Caco-2 (cell line): ENCODE measurements at regions of chr15 and their contacts with region 1.

Region 1: DNA sequence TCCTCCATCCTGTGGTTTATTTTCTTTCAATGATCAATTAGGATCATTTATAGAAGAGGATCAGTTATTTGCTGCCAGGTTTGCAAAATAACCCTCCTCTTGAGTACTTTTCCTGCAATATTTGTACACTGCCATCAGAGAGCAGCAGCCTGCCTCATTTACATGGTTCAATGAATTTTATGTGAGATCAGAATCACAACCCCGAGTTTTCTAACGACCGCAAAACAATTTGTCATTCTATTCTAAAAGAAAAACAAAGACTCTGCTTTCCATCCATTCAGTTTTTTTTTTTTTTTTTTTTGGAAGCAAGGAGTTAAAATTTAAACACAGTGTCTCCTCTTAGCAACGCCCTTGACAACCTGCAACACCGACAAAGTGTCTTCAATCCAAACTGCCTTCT is 146.9 kb downstream of the RAB11A start:
- DNase-seq: no peak
- H3K4me3 ChIP-seq: no peak overlapping the region
- H3K4me3 Mint-ChIP-seq: no peak overlapping the region
- H3K27ac Mint-ChIP-seq: no peak overlapping the region
- H3K4me1 ChIP-seq: no peaks in the 10 kb centered on the region
- H3K4me1 Mint-ChIP-seq: no peaks in the 10 kb centered on the region
- H3K27me3 ChIP-seq: no peaks in the 10 kb centered on the region; the same call in 1 of the 2 replicates
- H3K27me3 Mint-ChIP-seq: peaks cover 8% of the 10 kb centered on the region
- CTCF ChIP-seq: no peak

Region 2: GRCh38 chr15:65484876-65485275 is 531.3 kb before region 1 on chr15:
- CTCF ChIA-PET with region 1: no interaction called
- POLR2A ChIA-PET with region 1: no interaction called
- intact Hi-C with region 1: no loop called
- DNase-seq: no peak
- H3K4me3 ChIP-seq: no peak overlapping the region
- H3K4me3 Mint-ChIP-seq: no peak overlapping the region
- H3K27ac Mint-ChIP-seq: no peak overlapping the region
- H3K4me1 ChIP-seq: no peaks in the 10 kb centered on the region
- H3K4me1 Mint-ChIP-seq: no peaks in the 10 kb centered on the region
- H3K27me3 ChIP-seq: no peaks in the 10 kb centered on the region
- H3K27me3 Mint-ChIP-seq: no peaks in the 10 kb centered on the region
- CTCF ChIP-seq: no peak

Region 3: GRCh38 chr15:65998486-65998885 is 17.7 kb before region 1 on chr15:
- CTCF ChIA-PET with region 1: no interaction called
- POLR2A ChIA-PET with region 1: interaction called, 11 read pairs
- intact Hi-C with region 1: no loop called
- DNase-seq: no peak
- H3K4me3 ChIP-seq: no peak overlapping the region
- H3K4me3 Mint-ChIP-seq: no peak overlapping the region
- H3K27ac Mint-ChIP-seq: no peak overlapping the region
- H3K4me1 ChIP-seq: no peaks in the 10 kb centered on the region
- H3K4me1 Mint-ChIP-seq: no peaks in the 10 kb centered on the region
- H3K27me3 ChIP-seq: no peaks in the 10 kb centered on the region; the same call in 1 of the 2 replicates
- H3K27me3 Mint-ChIP-seq: peaks cover 13% of the 10 kb centered on the region
- CTCF ChIP-seq: no peak

Region 4: DNA sequence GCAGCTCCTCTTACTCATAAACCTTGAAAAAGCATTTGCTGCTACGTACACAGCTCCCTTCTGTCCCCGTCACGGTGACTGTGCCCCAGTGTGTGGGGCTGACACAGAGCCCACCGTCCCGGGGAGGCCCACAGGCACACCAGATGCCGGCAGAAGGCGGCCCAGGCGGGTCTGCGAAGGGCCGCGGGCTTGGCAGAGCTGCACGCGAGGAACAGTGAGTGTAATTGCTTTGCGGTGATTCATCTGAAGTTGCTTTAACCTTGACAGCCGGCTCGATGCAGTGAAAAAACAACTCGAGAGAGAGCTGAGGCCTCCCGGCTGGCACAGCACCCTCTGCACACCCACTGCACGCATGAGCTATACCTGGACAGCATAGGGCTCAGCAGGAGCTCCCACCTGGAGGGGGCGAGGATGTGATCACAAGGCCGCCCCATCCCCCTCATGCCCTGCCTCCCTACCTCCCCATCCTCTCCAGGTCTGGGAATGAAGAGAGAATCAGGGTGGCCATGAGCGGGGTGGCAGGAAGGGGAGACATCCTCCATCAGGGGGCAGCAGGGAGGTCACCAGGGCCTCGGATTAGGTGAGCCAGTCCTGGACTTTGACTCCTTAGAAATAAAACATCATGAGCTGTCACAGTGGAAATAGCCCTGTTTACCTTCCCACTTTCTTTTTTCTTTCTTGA is 64.7 kb after region 1 on chr15:
- CTCF ChIA-PET with region 1: no interaction called
- POLR2A ChIA-PET with region 1: no interaction called
- intact Hi-C with region 1: no loop called
- DNase-seq: peak; percentile 51 to 55
- H3K4me3 ChIP-seq: no peak overlapping the region
- H3K4me3 Mint-ChIP-seq: no peak overlapping the region
- H3K27ac Mint-ChIP-seq: no peak overlapping the region
- H3K4me1 ChIP-seq: peaks cover 7% of the 10 kb centered on the region; the same call in 1 of the 2 replicates
- H3K4me1 Mint-ChIP-seq: no peaks in the 10 kb centered on the region
- H3K27me3 ChIP-seq: no peaks in the 10 kb centered on the region
- H3K27me3 Mint-ChIP-seq: peaks cover 16% of the 10 kb centered on the region
- CTCF ChIP-seq: peak in 1 of 2 experiments; percentile 59